ENCODE measurements at regions of chr5 and their contacts with region 1.

Region 1: DNA sequence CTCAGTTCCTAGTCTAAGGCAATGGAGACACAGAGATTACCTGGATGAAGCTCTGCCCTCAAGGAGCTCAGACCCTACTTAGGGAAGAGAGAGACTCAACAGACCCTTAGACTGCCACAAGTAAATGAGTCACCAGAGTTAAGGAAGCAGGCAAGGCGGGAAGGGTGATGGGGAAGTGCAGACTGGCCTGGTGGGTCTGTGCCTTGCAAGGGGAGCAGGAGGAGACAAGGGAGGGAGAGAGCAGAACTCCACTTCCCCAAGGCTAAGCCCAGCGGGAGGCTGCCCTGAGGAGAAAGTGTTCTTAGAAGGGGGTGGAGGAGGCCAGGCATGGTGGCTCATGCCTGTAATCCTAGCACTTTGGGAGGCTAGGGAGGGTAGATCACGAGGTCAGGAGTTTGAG is 83.7 kb downstream of the HRH2 start:
- DNase-seq: no peak
- ATAC-seq: no peak
- H3K4me3 ChIP-seq: no peak overlapping the region
- H3K27ac ChIP-seq: no peak overlapping the region
- H3K4me1 ChIP-seq: no peaks in the 10 kb centered on the region
- H3K27me3 ChIP-seq: peaks cover 8% of the 10 kb centered on the region
- CTCF ChIP-seq: no peak

Region 2: GRCh38 chr5:175418285-175418684 is 323.3 kb before region 1 on chr5:
- CTCF ChIA-PET with region 1: no interaction called
- POLR2A ChIA-PET with region 1: interaction called, 18 read pairs
- in situ Hi-C with region 1: no loop called
- intact Hi-C with region 1: no loop called
- DNase-seq: no peak
- ATAC-seq: no peak
- H3K4me3 ChIP-seq: no peak overlapping the region
- H3K27ac ChIP-seq: no peak overlapping the region
- H3K4me1 ChIP-seq: no peaks in the 10 kb centered on the region
- H3K27me3 ChIP-seq: no peaks in the 10 kb centered on the region
- CTCF ChIP-seq: no peak